A549 (cell line): ENCODE measurements at regions of chr6 and their contacts with region 1.

Region 1: GRCh38 chr6:28923318-28924102 is at the start of gene TRIM27:
- DNase-seq: peak; percentile 75 to 85
- ATAC-seq: peak; percentile 92 to 95
- H3K4me3 ChIP-seq: peak within 1 kb of the TSS; percentile 97
- H3K27ac ChIP-seq: peak within 1 kb of the TSS; percentile 96 to 99
- H3K4me1 ChIP-seq: peaks cover 17% of the 10 kb centered on the region
- CTCF ChIP-seq: no peak
- EP300 ChIP-seq: no peak
- POLR2A ChIP-seq: peak; percentile 91
- RAD21 ChIP-seq: no peak
- polyA plus RNA-seq, gene TRIM27: 50.1 and 51.4 TPM in 2 replicates

Region 2: DNA sequence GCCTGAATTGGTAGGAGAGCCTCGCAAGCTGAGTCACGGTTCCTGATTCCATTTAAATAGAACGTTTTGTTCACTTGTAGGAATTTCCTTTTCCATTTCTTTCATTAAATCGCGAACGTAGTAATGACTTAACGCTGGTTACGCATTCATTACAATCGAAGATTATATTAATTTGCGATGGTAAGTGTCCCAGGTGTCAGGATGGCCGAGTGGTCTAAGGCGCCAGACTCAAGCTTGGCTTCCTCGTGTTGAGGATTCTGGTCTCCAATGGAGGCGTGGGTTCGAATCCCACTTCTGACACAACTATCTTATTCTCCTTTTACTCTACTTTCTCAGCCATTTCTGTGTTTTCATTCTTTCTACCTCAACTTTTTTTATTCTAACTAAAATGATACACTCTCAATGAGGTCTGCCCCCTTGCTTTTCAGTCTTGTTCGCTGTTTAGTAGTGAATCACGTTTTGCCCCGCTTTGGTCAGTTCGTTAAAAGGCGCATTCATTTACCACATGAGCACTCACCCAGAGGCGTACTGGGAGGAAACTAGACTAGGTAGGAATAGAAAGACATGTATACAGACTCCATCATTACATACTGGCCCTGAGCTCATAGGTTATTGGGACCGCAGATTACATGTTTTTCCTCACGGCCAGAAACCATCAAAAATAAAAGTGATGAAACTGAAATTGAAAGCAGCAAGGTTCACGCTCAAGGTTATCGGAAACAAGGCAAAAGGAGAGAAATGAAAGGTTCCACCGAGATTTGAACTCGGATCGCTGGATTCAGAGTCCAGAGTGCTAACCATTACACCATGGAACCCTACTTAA is 17.6 kb after region 1 on chr6:
- CTCF ChIA-PET with region 1: interaction called, 14 read pairs
- POLR2A ChIA-PET with region 1: interaction called, 13 read pairs
- DNase-seq: peak in 1 of 2 experiments; percentile 89
- ATAC-seq: peak; percentile 83 to 85
- H3K4me3 ChIP-seq: peak overlapping the region; percentile 55
- H3K27ac ChIP-seq: peak overlapping the region; percentile 81 to 83
- H3K4me1 ChIP-seq: peaks cover 9% of the 10 kb centered on the region; the same call in 1 of the 3 replicates
- CTCF ChIP-seq: no peak
- EP300 ChIP-seq: no peak
- POLR2A ChIP-seq: no peak
- RAD21 ChIP-seq: no peak